IMR-90 (cell line): ENCODE measurements at regions of chr12 and their contacts with region 1.

Region 1: GRCh38 chr12:78181544-78182162 is 351.0 kb downstream of the NAV3 start:
- DNase-seq: peak; percentile 48
- ATAC-seq: peak; percentile 63
- H3K4me3 ChIP-seq: no peak overlapping the region
- H3K27ac ChIP-seq: no peak overlapping the region
- H3K4me1 ChIP-seq: peaks cover 6% of the 10 kb centered on the region; the same call in 1 of the 2 replicates
- H3K27me3 ChIP-seq: no peaks in the 10 kb centered on the region
- CTCF ChIP-seq: peak; percentile 68
- POLR2A ChIP-seq: no peak
- RAD21 ChIP-seq: peak; percentile 69

Region 2: DNA sequence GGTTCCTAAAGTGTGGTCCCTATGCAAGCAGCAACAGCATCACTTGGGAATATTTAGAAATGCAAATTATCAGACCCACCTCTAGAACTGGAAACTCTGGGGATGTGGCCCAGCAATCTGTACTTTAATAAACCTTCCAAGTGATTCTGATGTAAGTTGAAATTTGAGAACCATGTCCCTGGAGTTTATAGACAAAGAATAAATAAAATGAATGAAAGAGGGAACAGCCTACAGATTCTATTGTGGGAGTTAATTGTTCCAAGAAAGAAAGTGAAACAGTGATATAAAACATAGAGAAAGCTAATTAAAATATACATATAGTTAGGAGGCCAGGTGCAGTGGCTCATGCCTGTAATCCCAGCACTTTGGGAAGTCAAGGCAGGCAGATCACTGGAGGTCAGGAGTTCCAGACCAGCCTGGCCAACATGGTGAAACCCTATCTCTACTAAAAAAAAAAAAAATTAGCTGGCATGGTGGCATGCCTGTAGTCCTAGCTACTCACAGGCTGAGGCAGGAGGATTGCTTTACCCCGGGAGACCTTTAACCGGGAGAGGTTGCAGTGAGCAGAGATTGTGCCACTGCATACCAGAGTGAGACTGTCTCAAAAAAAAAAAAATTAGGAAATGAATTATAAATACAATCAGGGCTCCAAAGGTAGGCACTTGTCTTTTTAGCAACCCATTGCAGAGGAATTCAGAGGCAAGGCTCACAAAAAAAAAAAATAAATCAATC is 156.6 kb after region 1 on chr12:
- CTCF ChIA-PET with region 1: no interaction called
- POLR2A ChIA-PET with region 1: no interaction called
- dilution Hi-C with region 1: no loop called
- in situ Hi-C with region 1: no loop called
- intact Hi-C with region 1: no loop called
- DNase-seq: no peak
- ATAC-seq: no peak; the same call in 1 of the 2 replicates
- H3K4me3 ChIP-seq: no peak overlapping the region
- H3K27ac ChIP-seq: no peak overlapping the region
- H3K4me1 ChIP-seq: no peaks in the 10 kb centered on the region
- H3K27me3 ChIP-seq: no peaks in the 10 kb centered on the region
- CTCF ChIP-seq: no peak
- POLR2A ChIP-seq: no peak
- RAD21 ChIP-seq: no peak

Region 3: GRCh38 chr12:78420991-78421390 is 239.3 kb after region 1 on chr12:
- CTCF ChIA-PET with region 1: no interaction called
- POLR2A ChIA-PET with region 1: no interaction called
- dilution Hi-C with region 1: no loop called
- in situ Hi-C with region 1: no loop called
- intact Hi-C with region 1: loop called (anchors 10 kb)
- DNase-seq: peak; percentile 8
- ATAC-seq: no peak
- H3K4me3 ChIP-seq: no peak overlapping the region
- H3K27ac ChIP-seq: no peak overlapping the region
- H3K4me1 ChIP-seq: no peaks in the 10 kb centered on the region
- H3K27me3 ChIP-seq: no peaks in the 10 kb centered on the region
- CTCF ChIP-seq: no peak
- POLR2A ChIP-seq: no peak
- RAD21 ChIP-seq: no peak

Region 4: DNA sequence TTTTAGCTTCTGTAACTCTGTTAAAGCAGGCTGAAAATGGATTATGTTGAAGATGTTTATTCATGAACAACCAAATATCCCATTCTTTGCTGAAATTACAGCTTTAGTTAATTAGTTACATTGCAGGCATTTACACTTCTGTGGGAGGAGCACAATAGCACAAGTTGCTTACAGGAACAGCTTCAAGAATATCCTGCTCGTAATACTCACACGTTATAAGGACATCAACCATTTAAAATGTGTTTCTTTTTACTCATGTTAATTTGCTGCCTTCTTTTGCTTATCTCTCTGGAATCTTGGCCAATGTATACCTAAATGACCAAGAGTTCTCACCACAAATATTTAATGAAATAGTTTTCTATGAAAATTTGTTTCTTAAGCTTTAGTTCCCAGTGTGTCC is 377.8 kb after region 1 on chr12:
- CTCF ChIA-PET with region 1: no interaction called
- POLR2A ChIA-PET with region 1: no interaction called
- dilution Hi-C with region 1: no loop called
- in situ Hi-C with region 1: no loop called
- intact Hi-C with region 1: loop called (anchors 10 kb)
- DNase-seq: peak; percentile 6
- ATAC-seq: no peak
- H3K4me3 ChIP-seq: no peak overlapping the region
- H3K27ac ChIP-seq: no peak overlapping the region
- H3K4me1 ChIP-seq: no peaks in the 10 kb centered on the region
- H3K27me3 ChIP-seq: no peaks in the 10 kb centered on the region
- CTCF ChIP-seq: no peak
- POLR2A ChIP-seq: no peak
- RAD21 ChIP-seq: no peak

Region 5: GRCh38 chr12:78584695-78585531 is 403.3 kb after region 1 on chr12:
- CTCF ChIA-PET with region 1: no interaction called
- POLR2A ChIA-PET with region 1: no interaction called
- dilution Hi-C with region 1: no loop called
- in situ Hi-C with region 1: no loop called
- intact Hi-C with region 1: loop called (anchors 5 kb)
- DNase-seq: peak; percentile 6
- ATAC-seq: no peak
- H3K4me3 ChIP-seq: no peak overlapping the region
- H3K27ac ChIP-seq: no peak overlapping the region
- H3K4me1 ChIP-seq: no peaks in the 10 kb centered on the region
- H3K27me3 ChIP-seq: no peaks in the 10 kb centered on the region
- CTCF ChIP-seq: peak; percentile 13; the same call in 1 of the 2 replicates
- POLR2A ChIP-seq: no peak
- RAD21 ChIP-seq: peak; percentile 41; the same call in 1 of the 2 replicates

Region 6: GRCh38 chr12:78863482-78864402 is 682.1 kb after region 1 on chr12:
- CTCF ChIA-PET with region 1: no interaction called
- POLR2A ChIA-PET with region 1: no interaction called
- dilution Hi-C with region 1: no loop called
- in situ Hi-C with region 1: no loop called
- intact Hi-C with region 1: loop called (anchors 10 kb)
- DNase-seq: peak; percentile 39
- ATAC-seq: peak; percentile 63
- H3K4me3 ChIP-seq: peak overlapping the region; percentile 57
- H3K27ac ChIP-seq: peak overlapping the region; percentile 5; the same call in 1 of the 2 replicates
- H3K4me1 ChIP-seq: no peaks in the 10 kb centered on the region
- H3K27me3 ChIP-seq: no peaks in the 10 kb centered on the region; the same call in 1 of the 2 replicates
- CTCF ChIP-seq: no peak
- POLR2A ChIP-seq: no peak
- RAD21 ChIP-seq: no peak